AG04449 (cell line): ENCODE measurements at regions of chr19 and their contacts with region 1.

Region 1: GRCh38 chr19:39052243-39052746 is 19.9 kb upstream of the FBXO27 start:
- DNase-seq: no peak
- H3K4me3 ChIP-seq: no peak overlapping the region
- CTCF ChIP-seq: peak; percentile 90

Region 2: DNA sequence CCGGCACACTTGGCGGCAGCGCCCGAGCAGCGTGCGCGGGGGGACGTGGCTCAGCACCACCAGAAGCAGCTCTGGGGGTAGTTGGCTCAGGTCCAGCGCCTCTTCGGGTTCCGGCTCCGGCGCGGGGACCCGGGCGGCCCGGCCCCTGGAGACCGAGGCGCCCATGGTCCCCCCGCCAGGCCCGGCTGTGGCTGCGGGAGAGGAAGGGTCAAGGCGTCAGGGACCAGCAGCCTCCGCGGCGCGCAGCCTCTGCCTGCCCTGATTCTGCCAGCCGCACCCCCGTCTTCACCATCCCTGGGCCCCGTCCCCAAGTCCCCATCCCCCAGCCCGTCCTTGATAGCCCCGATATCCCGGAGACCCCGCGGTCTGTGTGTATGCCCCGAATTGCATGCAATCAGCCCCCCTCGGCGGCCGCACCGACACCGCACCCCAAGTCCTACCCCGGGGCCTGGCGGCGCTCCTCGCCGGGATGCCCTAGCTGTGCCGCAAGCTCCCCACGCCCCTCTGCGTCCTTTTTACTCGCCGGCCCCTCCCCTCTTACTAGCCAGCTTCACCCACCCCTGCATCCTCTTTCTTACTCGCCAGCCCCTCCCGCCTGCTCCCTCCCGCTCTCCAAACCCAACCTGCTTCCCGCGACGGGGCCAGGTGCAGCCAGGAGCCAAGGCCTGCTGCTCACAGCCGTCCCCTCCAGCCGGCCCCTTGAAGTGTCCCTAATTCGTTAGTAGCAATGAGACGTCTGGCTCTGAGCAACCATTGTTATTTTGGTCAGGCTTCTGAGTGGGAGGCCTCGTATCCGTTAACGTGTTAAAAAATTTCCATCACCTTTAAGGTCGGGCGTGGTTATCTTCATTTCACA is 20.0 kb before region 1 on chr19 and contains the start of gene FBXO27:
- CTCF ChIA-PET with region 1: interaction called, 14 read pairs
- POLR2A ChIA-PET with region 1: no interaction called
- DNase-seq: no peak
- H3K4me3 ChIP-seq: peak within 1 kb of the TSS; percentile 59
- CTCF ChIP-seq: no peak

Region 3: GRCh38 chr19:39038098-39038497 is 14.2 kb before region 1 on chr19:
- CTCF ChIA-PET with region 1: interaction called, 18 read pairs
- POLR2A ChIA-PET with region 1: no interaction called
- DNase-seq: no peak
- H3K4me3 ChIP-seq: no peak overlapping the region
- CTCF ChIP-seq: peak; percentile 32